ENCODE measurements at regions of chr6 and their contacts with region 1.

Region 1: GRCh38 chr6:109236115-109237076 is 141.1 kb downstream of the CEP57L1 start:
- DNase-seq: peak; percentile 32 to 54
- ATAC-seq: peak; percentile 62 to 73 (median 66)
- H3K4me3 ChIP-seq: no peak overlapping the region
- H3K4me3 Mint-ChIP-seq: peak overlapping the region; percentile 72
- H3K27ac ChIP-seq: peak overlapping the region; percentile 76
- H3K27ac Mint-ChIP-seq: peak overlapping the region; percentile 81 to 88
- H3K4me1 ChIP-seq: peaks cover 30% of the 10 kb centered on the region
- H3K4me1 Mint-ChIP-seq: peaks cover 36 to 38% of the 10 kb centered on the region in 2 donors
- H3K27me3 ChIP-seq: no peaks in the 10 kb centered on the region
- H3K27me3 Mint-ChIP-seq: no peaks in the 10 kb centered on the region
- CTCF ChIP-seq: peak; percentile 34

Region 2: GRCh38 chr6:108294727-108295625 is 941.4 kb before region 1 on chr6 and contains the start of gene AFG1L:
- intact Hi-C with region 1: no loop called
- DNase-seq: peak; percentile 87 to 89
- ATAC-seq: peak; percentile 93 to 98 (median 95)
- H3K4me3 ChIP-seq: peak within 1 kb of the TSS; percentile 84
- H3K4me3 Mint-ChIP-seq: peak within 1 kb of the TSS; percentile 100
- H3K27ac ChIP-seq: peak within 1 kb of the TSS; percentile 92
- H3K27ac Mint-ChIP-seq: peak within 1 kb of the TSS; percentile 99
- H3K4me1 ChIP-seq: peaks cover 13% of the 10 kb centered on the region
- H3K4me1 Mint-ChIP-seq: peaks cover 9 to 11% of the 10 kb centered on the region in 2 donors
- H3K27me3 ChIP-seq: no peaks in the 10 kb centered on the region
- H3K27me3 Mint-ChIP-seq: no peaks in the 10 kb centered on the region
- CTCF ChIP-seq: no peak
- total RNA-seq, gene AFG1L: 4.8 to 9.2 (median 5.2) TPM

Region 3: DNA sequence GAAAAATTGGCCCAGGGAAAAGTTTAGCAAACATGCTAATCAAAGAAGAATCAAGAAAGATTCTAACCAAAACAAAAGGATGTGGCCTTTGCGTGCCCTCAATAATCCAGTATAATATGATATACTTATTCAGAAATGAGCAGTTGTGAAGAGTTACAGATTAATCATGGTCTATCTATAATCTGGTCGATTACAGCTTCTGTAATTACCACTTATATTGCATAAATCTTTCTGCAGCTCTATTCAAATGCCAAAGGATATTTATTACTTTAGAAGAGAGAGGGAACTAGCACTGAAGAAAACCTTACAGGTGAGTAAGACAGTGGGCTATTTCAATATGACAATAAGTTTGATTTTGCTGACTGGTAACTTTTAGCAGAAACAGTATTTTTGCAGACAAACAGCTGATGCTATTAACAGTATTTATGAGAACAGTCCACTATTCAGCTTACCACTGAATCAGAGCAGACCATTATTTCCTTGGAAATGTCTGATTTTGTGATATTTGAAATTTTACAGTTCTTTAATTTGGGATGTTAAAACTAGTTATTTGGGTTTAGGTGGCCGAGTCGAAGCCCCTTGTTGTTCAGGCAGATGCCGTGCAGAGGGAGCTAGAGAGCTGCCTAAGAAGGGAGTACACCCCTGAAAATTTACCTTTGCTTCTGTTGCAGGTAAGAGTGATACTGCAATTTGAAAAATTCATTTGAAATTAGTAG is 48.8 kb before region 1 on chr6:
- intact Hi-C with region 1: loop called (anchors 1 kb)
- DNase-seq: peak; percentile 43 to 82
- ATAC-seq: peak; percentile 71 to 92 (median 89)
- H3K4me3 ChIP-seq: no peak overlapping the region
- H3K4me3 Mint-ChIP-seq: no peak overlapping the region
- H3K27ac ChIP-seq: no peak overlapping the region
- H3K27ac Mint-ChIP-seq: no peak overlapping the region
- H3K4me1 ChIP-seq: no peaks in the 10 kb centered on the region
- H3K4me1 Mint-ChIP-seq: no peaks in the 10 kb centered on the region
- H3K27me3 ChIP-seq: peaks cover 3% of the 10 kb centered on the region
- H3K27me3 Mint-ChIP-seq: peaks cover 12 to 45% of the 10 kb centered on the region in 2 donors
- CTCF ChIP-seq: peak; percentile 98

Region 4: DNA sequence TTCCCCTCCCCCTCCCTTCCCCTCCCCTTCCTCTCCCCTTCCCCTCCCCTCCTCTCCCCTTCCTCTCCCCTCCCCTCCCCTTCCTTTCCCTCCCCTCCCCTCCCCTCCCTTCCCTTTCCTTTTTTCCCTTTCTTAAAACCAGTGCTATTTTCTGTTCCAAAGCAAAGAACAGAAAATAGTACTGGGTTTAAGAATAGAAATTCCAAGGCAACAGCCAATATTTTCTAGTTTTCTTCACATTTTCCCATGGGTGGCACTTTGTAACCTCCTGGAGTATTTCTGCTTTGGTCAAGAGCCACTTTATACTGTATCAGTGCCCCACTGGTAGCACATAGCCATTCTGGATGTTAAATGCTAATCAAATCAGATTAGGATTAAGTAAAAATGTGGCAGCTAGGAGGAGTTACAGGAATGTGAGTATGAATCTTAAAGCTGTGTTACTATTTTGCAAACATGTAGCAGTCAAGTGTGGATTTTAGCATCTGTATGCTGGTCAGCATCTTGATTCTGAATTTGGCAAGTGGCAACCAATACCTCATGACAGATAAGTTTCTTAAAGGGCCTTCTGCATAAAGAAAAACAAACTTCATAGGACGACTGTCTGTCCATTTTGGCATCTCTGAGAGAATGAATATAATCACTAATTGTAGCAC is 14.7 kb before region 1 on chr6:
- intact Hi-C with region 1: loop called (anchors 2 kb)
- DNase-seq: no peak
- ATAC-seq: peak in 1 of 3 donors; percentile 14
- H3K4me3 ChIP-seq: no peak overlapping the region
- H3K4me3 Mint-ChIP-seq: peak overlapping the region; percentile 40
- H3K27ac ChIP-seq: no peak overlapping the region
- H3K27ac Mint-ChIP-seq: peak overlapping the region; percentile 56 to 72
- H3K4me1 ChIP-seq: peaks cover 4% of the 10 kb centered on the region
- H3K4me1 Mint-ChIP-seq: peaks cover 33 to 45% of the 10 kb centered on the region in 2 donors
- H3K27me3 ChIP-seq: no peaks in the 10 kb centered on the region
- H3K27me3 Mint-ChIP-seq: peaks cover 0 to 11% of the 10 kb centered on the region in 2 donors
- CTCF ChIP-seq: no peak

Measured in natural killer cell (primary cell).